Uterus (tissue), 4 donors: ENCODE measurements at regions of chr6 and their contacts with region 1.

Region 1: DNA sequence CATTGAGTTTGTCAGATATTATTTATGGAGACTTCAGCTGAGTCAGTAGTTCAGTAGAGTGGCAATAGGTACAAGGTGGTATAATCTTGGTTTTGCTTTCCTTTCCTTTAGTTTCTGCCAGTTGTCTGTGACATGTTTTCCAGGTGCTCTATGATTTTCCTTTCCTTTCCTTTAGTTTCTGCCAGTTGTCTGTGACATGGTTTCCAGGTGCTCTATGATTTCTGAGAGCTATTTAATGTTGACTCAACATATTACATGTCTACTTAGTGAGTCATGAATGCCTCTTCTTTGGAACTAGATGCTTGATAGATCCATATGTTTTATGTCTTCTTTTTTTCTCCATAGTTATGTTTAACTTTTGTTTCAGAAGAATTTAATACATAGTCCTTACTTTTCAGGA is 186.4 kb upstream of the DEFB112 start:
- DNase-seq: no peak
- H3K4me3 ChIP-seq: no peak overlapping the region
- H3K27ac ChIP-seq: no peak overlapping the region
- H3K4me1 ChIP-seq: no peaks in the 10 kb centered on the region
- H3K27me3 ChIP-seq: no peaks in the 10 kb centered on the region
- CTCF ChIP-seq: no peak
- POLR2A ChIP-seq: no peak

Region 2: DNA sequence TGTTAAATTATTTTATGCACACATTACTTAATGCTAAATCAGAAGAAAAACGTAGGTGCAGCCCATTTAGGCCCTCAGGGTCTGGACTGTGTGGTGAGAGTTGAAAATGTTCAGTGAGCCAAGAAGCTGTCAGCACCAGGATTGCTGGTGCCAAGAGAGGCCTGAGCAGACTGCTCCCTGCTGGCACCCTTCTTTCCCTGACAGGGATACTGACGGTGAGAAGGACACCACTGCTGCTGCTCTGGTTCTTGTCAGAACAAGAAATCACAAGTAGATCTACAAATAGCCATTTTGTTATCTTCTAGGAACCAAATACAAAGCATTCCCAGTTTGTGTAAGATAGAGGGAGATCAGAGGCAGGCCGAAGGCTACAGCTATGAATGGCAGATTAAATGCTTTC is 321.1 kb before region 1 on chr6:
- intact Hi-C with region 1: no loop called
- DNase-seq: no peak
- H3K4me3 ChIP-seq: no peak overlapping the region
- H3K27ac ChIP-seq: no peak overlapping the region
- H3K4me1 ChIP-seq: no peaks in the 10 kb centered on the region
- H3K27me3 ChIP-seq: no peaks in the 10 kb centered on the region
- CTCF ChIP-seq: no peak
- POLR2A ChIP-seq: no peak

Region 3: GRCh38 chr6:49939993-49940498 is 296.1 kb before region 1 on chr6:
- intact Hi-C with region 1: no loop called
- DNase-seq: no peak
- H3K4me3 ChIP-seq: no peak overlapping the region
- H3K27ac ChIP-seq: no peak overlapping the region
- H3K4me1 ChIP-seq: no peaks in the 10 kb centered on the region
- H3K27me3 ChIP-seq: no peaks in the 10 kb centered on the region
- CTCF ChIP-seq: no peak
- POLR2A ChIP-seq: no peak

Region 4: GRCh38 chr6:50404643-50405042 is 168.5 kb after region 1 on chr6:
- intact Hi-C with region 1: loop called (anchors 5 kb)
- DNase-seq: no peak
- H3K4me3 ChIP-seq: no peak overlapping the region
- H3K27ac ChIP-seq: no peak overlapping the region
- H3K4me1 ChIP-seq: no peaks in the 10 kb centered on the region
- H3K27me3 ChIP-seq: no peaks in the 10 kb centered on the region
- CTCF ChIP-seq: no peak
- POLR2A ChIP-seq: no peak

Region 5: DNA sequence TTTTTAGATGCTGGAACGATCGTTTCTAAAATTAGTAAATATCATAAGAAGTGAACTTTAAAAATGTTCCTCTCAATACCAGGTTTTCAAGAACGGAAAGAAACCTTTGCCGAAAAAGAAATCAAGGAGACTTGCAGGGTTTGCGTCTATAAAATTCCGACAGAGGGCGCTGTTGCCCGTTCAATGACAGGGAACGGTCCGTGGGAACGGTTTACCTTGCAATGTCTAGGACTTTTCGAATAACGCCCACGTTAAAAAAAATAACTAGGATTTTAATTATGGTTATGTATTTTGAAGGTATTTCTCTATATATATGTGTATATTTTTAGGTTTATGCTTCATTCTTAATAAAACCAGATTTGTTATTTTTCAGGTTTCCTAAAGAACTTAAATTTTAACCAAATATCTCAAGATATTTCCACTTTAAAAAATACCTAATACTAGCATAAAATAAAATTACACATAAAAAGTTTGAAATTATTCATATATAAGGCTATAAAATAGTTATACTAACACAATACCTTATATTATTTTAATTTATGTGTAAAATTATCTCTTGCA is 580.0 kb after region 1 on chr6:
- intact Hi-C with region 1: no loop called
- DNase-seq: peak in 1 of 2 donors; percentile 19
- H3K4me3 ChIP-seq: peak overlapping the region in 1 of 2 donors; percentile 21
- H3K27ac ChIP-seq: no peak overlapping the region
- H3K4me1 ChIP-seq: peaks cover 0 to 7% of the 10 kb centered on the region in 2 donors
- H3K27me3 ChIP-seq: peaks cover 0 to 42% of the 10 kb centered on the region in 2 donors
- CTCF ChIP-seq: peak; percentile 35 to 64 (median 50)
- POLR2A ChIP-seq: no peak